Left cardiac atrium (tissue), 4 donors: ENCODE measurements at regions of chr5 and their contacts with region 1.

Region 1: DNA sequence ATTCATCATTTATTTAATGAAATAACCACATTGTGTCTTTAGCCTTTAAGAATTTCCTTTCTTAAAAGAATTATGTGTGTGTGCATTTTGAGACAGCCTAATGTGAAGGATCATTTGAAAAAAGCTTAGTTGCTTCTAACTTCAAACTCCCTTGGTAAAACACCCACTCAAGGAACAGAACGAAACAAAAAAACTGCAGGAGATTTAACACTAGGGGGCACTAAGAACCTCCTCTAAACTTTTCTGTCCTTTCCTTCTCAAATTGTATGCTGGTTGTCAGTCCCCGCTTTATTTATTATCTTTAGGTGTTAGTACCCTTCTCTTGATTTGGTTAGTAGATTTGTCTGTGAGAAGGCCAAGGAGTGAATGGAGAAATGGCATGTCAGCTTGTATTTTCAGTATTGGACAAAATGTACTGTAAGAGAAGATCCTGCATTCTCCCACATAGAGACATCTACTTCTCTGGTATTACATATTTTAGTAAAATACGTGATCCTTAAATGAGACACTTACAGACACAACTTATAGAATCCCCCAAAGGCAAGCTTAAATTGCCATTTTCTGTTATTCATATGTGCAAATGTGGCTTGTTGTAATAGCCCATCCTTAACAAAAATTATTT is 229.7 kb downstream of the MRPS30 start:
- DNase-seq: no peak
- ATAC-seq: peak; percentile 39 to 44

Region 2: GRCh38 chr5:45521067-45521466 is 482.6 kb after region 1 on chr5:
- intact Hi-C with region 1: loop called in 1 of 2 experiments (anchors 10 kb)
- DNase-seq: no peak
- ATAC-seq: peak in 1 of 2 donors; percentile 56

Region 3: GRCh38 chr5:45639038-45639437 is 600.6 kb after region 1 on chr5:
- intact Hi-C with region 1: loop called in 1 of 2 experiments (anchors 5 kb)
- DNase-seq: no peak
- ATAC-seq: no peak

Region 4: DNA sequence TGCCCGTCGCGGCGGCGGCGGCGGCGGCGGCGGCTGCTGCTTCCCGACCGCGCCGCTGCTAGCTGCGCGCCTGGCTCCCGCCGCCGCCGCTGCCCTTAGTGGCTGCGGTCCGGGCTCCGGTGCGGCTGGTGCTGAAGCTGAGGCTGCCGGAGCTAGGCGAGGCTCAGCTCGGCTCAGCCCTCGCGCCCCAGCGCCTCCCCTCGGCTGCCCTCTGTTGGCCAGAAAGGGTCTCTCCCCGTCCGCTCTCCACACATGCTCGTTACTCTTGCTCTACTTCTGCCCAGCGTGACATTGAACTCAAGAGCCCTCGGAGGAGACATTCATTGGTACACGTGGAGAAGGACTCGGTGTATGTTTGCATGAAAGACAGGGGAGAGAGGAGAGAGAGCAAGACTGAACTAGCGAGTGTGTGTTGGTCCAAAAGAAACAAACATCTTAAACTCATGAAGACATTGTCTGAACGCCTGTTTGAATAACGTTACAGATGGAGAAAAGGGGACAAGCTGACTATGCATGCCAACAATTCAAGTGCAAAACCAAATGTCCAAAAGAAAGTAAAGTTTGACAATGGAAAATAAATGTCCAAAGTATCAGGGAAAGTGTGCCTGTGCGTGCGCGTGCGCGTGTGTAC is 657.8 kb after region 1 on chr5 and contains the start of gene HCN1:
- intact Hi-C with region 1: loop called in 1 of 2 experiments (anchors 2 kb)
- DNase-seq: peak; percentile 83
- ATAC-seq: peak; percentile 98
- total RNA-seq, gene HCN1: 5.6 to 8.0 TPM

Region 5: DNA sequence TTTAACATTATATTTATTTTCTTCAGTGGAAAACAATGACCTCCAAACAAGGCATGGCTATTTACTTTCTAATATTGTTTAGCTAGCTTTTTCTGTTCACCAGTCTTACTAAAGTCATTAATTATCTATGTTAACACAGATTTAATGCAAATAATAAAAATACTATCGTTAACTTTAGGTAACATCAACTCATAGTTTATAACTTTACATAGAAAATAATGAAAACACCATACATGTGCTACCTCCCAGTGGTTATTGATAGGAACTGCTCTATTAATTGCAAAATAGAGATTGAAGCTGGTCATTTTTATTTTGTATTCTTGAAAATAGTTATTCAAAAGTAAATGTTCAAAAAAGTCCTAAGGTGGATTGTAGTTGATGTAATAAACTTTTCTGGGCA is 736.1 kb after region 1 on chr5:
- intact Hi-C with region 1: loop called in 1 of 2 experiments (anchors 5 kb)
- DNase-seq: no peak
- ATAC-seq: no peak